Endothelial cell of umbilical vein (primary cell): ENCODE measurements at regions of chr20 and their contacts with region 1.

Region 1: DNA sequence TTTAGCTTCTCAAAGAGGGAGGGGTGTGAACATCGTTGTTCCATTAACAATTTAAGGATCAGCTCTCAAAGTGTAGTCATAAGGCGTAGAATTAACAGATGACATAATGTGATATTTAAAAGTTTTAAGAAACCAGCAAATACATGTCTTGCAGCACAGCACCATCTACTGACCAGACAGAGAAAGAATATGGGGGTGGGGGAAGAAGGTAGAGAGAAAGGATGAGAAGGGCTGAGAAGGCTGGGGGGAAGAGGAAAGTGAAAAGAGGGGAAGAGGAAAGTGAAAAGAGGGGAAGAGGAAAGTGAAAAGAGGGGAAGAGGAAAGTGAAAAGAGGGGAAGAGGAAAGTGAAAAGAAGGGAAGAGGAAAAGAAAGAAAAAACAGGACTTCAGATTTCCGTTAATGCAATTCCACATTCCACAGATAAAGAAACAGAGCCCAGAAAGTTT is 80.9 kb downstream of the HAO1 start:
- DNase-seq: peak; percentile 81
- H3K4me3 ChIP-seq: no peak overlapping the region
- H3K27ac ChIP-seq: peak overlapping the region; percentile 45
- H3K4me1 ChIP-seq: peaks cover 28% of the 10 kb centered on the region
- H3K27me3 ChIP-seq: no peaks in the 10 kb centered on the region
- CTCF ChIP-seq: peak; percentile 55 to 63
- POLR2A ChIP-seq: no peak

Region 2: GRCh38 chr20:6142348-6142993 is 1716.9 kb before region 1 on chr20:
- CTCF ChIA-PET with region 1: interaction called, 3 read pairs
- POLR2A ChIA-PET with region 1: no interaction called
- dilution Hi-C with region 1: no loop called
- intact Hi-C with region 1: loop called (anchors 5 kb)
- DNase-seq: peak; percentile 64
- H3K4me3 ChIP-seq: no peak overlapping the region
- H3K27ac ChIP-seq: no peak overlapping the region
- H3K4me1 ChIP-seq: no peaks in the 10 kb centered on the region
- H3K27me3 ChIP-seq: peaks cover 0 to 10% of the 10 kb centered on the region in 2 experiments
- CTCF ChIP-seq: peak; percentile 58 to 68
- POLR2A ChIP-seq: no peak

Region 3: DNA sequence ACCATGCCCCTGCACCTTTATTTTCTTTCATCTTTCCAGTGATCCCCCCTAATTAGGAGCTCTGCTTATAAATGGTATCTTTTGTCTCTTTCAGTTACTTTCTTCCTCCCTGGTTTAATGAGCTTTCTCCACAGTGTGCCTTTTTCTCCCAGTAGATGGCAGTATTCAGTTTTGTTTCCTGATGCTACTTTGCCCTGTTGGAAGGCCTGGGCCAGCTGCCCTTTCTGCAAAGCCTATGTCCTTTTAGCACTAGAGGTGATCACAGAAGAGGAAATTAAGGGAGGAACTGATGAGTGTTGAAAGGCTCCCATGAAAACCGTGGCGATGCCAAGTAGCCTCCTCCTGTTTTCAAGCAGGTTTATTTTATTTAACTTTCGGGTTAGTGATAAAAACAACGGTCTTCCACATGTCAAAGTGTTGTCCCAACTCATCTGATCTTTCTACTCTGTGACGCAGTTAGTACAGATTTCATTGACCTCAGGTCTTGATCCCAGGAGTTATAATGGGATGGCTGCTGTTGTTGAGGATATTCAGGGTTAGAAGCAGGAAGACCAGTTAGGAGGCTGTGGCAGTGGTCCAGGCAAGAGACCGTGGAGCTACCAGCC is 1276.1 kb before region 1 on chr20:
- CTCF ChIA-PET with region 1: interaction called, 5 read pairs
- POLR2A ChIA-PET with region 1: no interaction called
- dilution Hi-C with region 1: no loop called
- intact Hi-C with region 1: loop called (anchors 2 kb)
- DNase-seq: peak; percentile 78
- H3K4me3 ChIP-seq: no peak overlapping the region
- H3K27ac ChIP-seq: peak overlapping the region; percentile 24
- H3K4me1 ChIP-seq: peaks cover 15% of the 10 kb centered on the region
- H3K27me3 ChIP-seq: no peaks in the 10 kb centered on the region
- CTCF ChIP-seq: peak; percentile 56 to 61
- POLR2A ChIP-seq: no peak

Region 4: DNA sequence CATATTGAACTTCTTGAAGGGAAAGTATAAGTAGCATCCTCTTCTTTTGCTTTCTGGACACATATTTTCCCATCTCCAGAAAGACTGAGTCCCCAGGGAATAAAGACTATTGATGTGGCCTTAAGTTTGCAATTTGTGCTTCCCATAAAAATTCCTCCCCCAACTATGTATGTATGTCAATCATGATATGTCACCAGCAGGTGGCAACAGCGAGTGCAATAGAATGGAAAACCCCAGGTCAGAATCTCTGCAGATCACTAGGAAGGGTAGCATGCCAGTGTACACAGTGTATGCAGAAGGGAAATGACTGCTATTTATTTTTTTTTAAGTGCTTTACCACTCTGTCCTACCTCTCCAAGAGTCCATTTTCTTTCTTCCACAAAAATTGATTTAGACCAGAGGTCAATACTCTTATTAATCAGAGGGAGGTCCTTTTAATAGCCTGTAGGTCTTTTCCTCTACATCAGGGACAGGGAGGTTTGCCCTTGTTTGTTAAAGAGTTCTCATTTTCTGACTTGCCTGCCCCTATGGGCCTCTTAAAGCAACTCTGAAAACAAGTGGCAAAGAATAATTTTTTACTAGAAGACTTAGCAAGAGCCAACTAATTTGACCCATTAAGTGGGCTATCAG is 1030.5 kb before region 1 on chr20:
- CTCF ChIA-PET with region 1: interaction called, 57 read pairs
- POLR2A ChIA-PET with region 1: no interaction called
- dilution Hi-C with region 1: no loop called
- intact Hi-C with region 1: loop called (anchors 1 kb)
- DNase-seq: peak; percentile 85
- H3K4me3 ChIP-seq: no peak overlapping the region
- H3K27ac ChIP-seq: no peak overlapping the region
- H3K4me1 ChIP-seq: no peaks in the 10 kb centered on the region
- H3K27me3 ChIP-seq: no peaks in the 10 kb centered on the region
- CTCF ChIP-seq: peak; percentile 56 to 59
- POLR2A ChIP-seq: no peak

Region 5: GRCh38 chr20:7358670-7359069 is 500.7 kb before region 1 on chr20:
- CTCF ChIA-PET with region 1: interaction called, 10 read pairs
- POLR2A ChIA-PET with region 1: no interaction called
- dilution Hi-C with region 1: no loop called
- intact Hi-C with region 1: no loop called
- DNase-seq: peak; percentile 7
- H3K4me3 ChIP-seq: no peak overlapping the region
- H3K27ac ChIP-seq: no peak overlapping the region
- H3K4me1 ChIP-seq: no peaks in the 10 kb centered on the region
- H3K27me3 ChIP-seq: no peaks in the 10 kb centered on the region
- CTCF ChIP-seq: peak in 1 of 2 donors; percentile 23
- POLR2A ChIP-seq: no peak

Region 6: GRCh38 chr20:7497985-7498384 is 361.4 kb before region 1 on chr20:
- CTCF ChIA-PET with region 1: interaction called, 5 read pairs
- POLR2A ChIA-PET with region 1: no interaction called
- dilution Hi-C with region 1: no loop called
- intact Hi-C with region 1: loop called (anchors 1 kb)
- DNase-seq: peak; percentile 94
- H3K4me3 ChIP-seq: no peak overlapping the region
- H3K27ac ChIP-seq: peak overlapping the region; percentile 69
- H3K4me1 ChIP-seq: peaks cover 25% of the 10 kb centered on the region
- H3K27me3 ChIP-seq: no peaks in the 10 kb centered on the region
- CTCF ChIP-seq: no peak
- POLR2A ChIP-seq: peak; percentile 26

Region 7: GRCh38 chr20:7736336-7736735 is 123.0 kb before region 1 on chr20:
- CTCF ChIA-PET with region 1: interaction called, 3 read pairs
- POLR2A ChIA-PET with region 1: no interaction called
- dilution Hi-C with region 1: no loop called
- intact Hi-C with region 1: loop called (anchors 1 kb)
- DNase-seq: peak; percentile 67
- H3K4me3 ChIP-seq: no peak overlapping the region
- H3K27ac ChIP-seq: no peak overlapping the region
- H3K4me1 ChIP-seq: peaks cover 8% of the 10 kb centered on the region
- H3K27me3 ChIP-seq: no peaks in the 10 kb centered on the region
- CTCF ChIP-seq: no peak
- POLR2A ChIP-seq: no peak

Region 8: GRCh38 chr20:7897781-7898364 is 38.5 kb after region 1 on chr20:
- CTCF ChIA-PET with region 1: no interaction called
- POLR2A ChIA-PET with region 1: no interaction called
- dilution Hi-C with region 1: no loop called
- intact Hi-C with region 1: no loop called
- DNase-seq: no peak
- H3K4me3 ChIP-seq: no peak overlapping the region
- H3K27ac ChIP-seq: no peak overlapping the region
- H3K4me1 ChIP-seq: no peaks in the 10 kb centered on the region
- H3K27me3 ChIP-seq: no peaks in the 10 kb centered on the region
- CTCF ChIP-seq: no peak
- POLR2A ChIP-seq: no peak